ENCODE measurements at regions of chr20 and their contacts with region 1.

Region 1: GRCh38 chr20:59222253-59223181 is 58.9 kb downstream of the ZNF831 start:
- DNase-seq: peak; percentile 80 to 92 (median 91)
- ATAC-seq: peak; percentile 98
- H3K4me3 ChIP-seq: peak overlapping the region; percentile 19
- H3K4me1 ChIP-seq: peaks cover 3% of the 10 kb centered on the region
- CTCF ChIP-seq: peak; percentile 92

Region 2: DNA sequence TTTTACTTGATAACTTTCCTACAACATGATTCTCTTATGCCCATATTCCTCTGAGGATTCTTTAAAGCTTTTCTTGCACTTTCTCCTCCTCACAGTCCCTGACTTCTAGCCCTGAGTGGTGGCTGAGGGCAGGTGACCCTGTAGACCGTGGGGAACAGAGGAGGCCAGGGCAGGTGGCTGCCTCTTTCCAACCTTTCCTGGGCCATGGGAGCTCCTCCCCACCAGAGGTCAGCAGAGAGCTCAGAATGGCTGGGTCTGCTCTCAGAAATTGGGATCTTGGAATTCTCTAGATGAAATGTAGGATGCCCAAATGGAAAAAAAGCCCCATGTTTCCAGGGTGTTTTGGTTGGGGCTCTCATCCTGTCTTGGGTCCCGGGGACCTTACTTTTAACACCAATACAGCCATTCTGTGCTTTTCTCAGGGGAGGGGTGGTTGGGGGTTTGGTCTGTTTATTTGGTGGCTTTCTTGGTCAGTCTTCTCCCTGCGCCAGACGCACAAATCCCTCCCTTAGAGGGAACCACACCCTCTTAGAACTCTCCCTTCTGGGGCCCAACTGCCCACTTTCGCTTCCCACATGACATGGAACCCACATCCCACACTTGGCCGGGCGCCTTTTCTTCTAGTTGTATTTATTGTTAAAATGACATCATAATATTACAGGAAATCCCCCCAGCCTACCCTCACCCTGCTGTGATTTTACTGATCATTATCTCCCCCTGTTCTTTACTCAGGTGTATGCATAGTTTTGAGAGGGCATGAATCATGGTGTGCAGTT is 352.1 kb before region 1 on chr20:
- intact Hi-C with region 1: loop called (anchors 5 kb)
- DNase-seq: peak; percentile 54 to 86 (median 78)
- ATAC-seq: peak; percentile 92
- H3K4me3 ChIP-seq: no peak overlapping the region
- H3K4me1 ChIP-seq: no peaks in the 10 kb centered on the region
- CTCF ChIP-seq: peak; percentile 68

Region 3: GRCh38 chr20:59087829-59088433 is 134.6 kb before region 1 on chr20:
- intact Hi-C with region 1: loop called in 1 of 2 experiments (anchors 5 kb)
- DNase-seq: peak; percentile 73 to 96 (median 89)
- ATAC-seq: peak; percentile 92
- H3K4me3 ChIP-seq: no peak overlapping the region
- H3K4me1 ChIP-seq: no peaks in the 10 kb centered on the region
- CTCF ChIP-seq: peak; percentile 83

Region 4: GRCh38 chr20:59122062-59122919 is 100.2 kb before region 1 on chr20:
- intact Hi-C with region 1: no loop called
- DNase-seq: no peak
- ATAC-seq: no peak
- H3K4me3 ChIP-seq: no peak overlapping the region
- H3K4me1 ChIP-seq: no peaks in the 10 kb centered on the region
- CTCF ChIP-seq: no peak

Region 5: GRCh38 chr20:59173938-59174496 is 48.5 kb before region 1 on chr20:
- intact Hi-C with region 1: no loop called
- DNase-seq: no peak
- ATAC-seq: no peak
- H3K4me3 ChIP-seq: no peak overlapping the region
- H3K4me1 ChIP-seq: peaks cover 26% of the 10 kb centered on the region
- CTCF ChIP-seq: no peak

Region 6: GRCh38 chr20:59403261-59403961 is 180.9 kb after region 1 on chr20:
- intact Hi-C with region 1: loop called in 1 of 2 experiments (anchors 5 kb)
- DNase-seq: peak; percentile 63 to 79 (median 71)
- ATAC-seq: peak; percentile 93
- H3K4me3 ChIP-seq: no peak overlapping the region
- H3K4me1 ChIP-seq: peaks cover 15% of the 10 kb centered on the region
- CTCF ChIP-seq: peak; percentile 98